Activated CD4-positive, alpha-beta T cell treated with anti-CD3 and anti-CD28 coated beads for 36 hours (primary cell): ENCODE measurements at regions of chr18 and their contacts with region 1.

Region 1: GRCh38 chr18:54284981-54285785 is 15.9 kb downstream of the POLI start:
- DNase-seq: peak; percentile 90
- ATAC-seq: peak; percentile 98
- H3K4me3 Mint-ChIP-seq: no peak overlapping the region
- H3K27ac Mint-ChIP-seq: peak overlapping the region; percentile 64
- H3K4me1 Mint-ChIP-seq: peaks cover 25% of the 10 kb centered on the region
- H3K27me3 Mint-ChIP-seq: no peaks in the 10 kb centered on the region

Region 2: GRCh38 chr18:54162431-54162830 is 122.8 kb before region 1 on chr18:
- CTCF ChIA-PET with region 1: no interaction called
- POLR2A ChIA-PET with region 1: no interaction called
- intact Hi-C with region 1: loop called in 1 of 2 experiments (anchors 5 kb)
- DNase-seq: no peak
- ATAC-seq: no peak
- H3K4me3 Mint-ChIP-seq: no peak overlapping the region
- H3K27ac Mint-ChIP-seq: no peak overlapping the region
- H3K4me1 Mint-ChIP-seq: peaks cover 24% of the 10 kb centered on the region
- H3K27me3 Mint-ChIP-seq: no peaks in the 10 kb centered on the region

Region 3: DNA sequence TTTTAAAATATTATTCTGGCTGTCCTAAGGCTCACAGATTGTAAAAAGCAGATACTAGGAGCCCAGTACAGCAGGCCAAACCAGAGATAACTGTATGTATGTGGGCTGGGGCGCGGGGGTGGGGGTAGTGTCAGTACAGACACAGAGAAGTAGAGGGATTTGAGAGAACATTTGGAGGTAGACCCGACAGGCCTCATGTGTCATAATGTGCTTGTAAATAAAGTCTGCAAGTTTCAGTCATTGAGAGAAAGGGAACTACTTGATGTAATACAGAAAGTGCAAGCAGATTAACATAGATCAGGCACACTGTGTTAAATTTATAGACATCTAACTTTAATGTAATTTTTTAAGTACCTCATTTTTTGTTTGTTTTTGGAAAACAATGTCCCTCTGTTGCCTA is 23.3 kb before region 1 on chr18:
- CTCF ChIA-PET with region 1: interaction called, 4 read pairs
- POLR2A ChIA-PET with region 1: interaction called, 3 read pairs
- intact Hi-C with region 1: loop called (anchors 1 kb)
- DNase-seq: peak; percentile 82
- ATAC-seq: peak; percentile 71
- H3K4me3 Mint-ChIP-seq: peak overlapping the region; percentile 52
- H3K27ac Mint-ChIP-seq: peak overlapping the region; percentile 90
- H3K4me1 Mint-ChIP-seq: peaks cover 54% of the 10 kb centered on the region
- H3K27me3 Mint-ChIP-seq: no peaks in the 10 kb centered on the region

Region 4: DNA sequence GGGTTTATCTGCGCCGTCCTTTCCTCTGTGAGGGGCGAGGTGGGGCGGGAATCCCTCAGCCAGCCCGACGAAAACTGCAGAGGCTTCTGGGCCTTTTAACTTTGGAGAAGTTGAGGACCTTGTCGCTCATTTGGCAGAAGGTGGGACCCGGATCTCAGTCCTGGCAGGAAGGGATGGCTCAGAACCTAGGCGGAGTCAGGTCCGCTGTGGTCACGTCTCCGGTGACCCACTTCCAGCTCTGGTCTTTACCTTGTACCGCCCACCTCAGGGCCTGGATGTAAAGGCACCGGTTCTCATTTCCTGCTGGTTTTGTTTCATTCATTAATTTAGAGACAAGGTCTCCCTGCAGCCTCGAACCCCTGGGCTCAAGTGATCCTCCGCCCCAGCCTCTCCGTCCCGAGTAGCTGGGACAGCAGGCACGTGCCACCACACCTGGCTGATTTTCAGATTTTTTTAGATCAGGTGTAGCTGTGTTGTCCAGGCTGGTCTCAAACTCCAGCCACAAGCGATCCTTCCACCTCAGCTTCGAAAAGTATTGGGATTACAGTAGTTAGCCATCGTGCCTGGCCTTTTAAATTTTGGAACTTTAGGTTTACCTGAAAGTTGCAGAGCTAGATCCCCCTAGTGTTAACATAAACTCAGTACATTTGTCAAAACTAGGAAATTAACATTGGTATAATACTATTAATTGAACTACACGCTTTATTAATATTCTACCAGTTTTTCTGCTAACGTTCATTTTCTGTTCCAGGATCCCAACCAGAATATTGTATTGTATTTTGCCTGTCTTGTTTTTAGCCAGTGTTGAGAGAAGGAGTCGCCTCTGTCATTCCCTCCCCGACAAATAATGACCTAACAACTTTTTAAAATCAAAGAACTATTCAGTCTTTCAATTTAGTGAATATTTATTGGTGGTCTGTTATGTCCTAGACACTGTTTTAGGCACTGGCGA is 15.0 kb before region 1 on chr18:
- CTCF ChIA-PET with region 1: interaction called, 26 read pairs
- POLR2A ChIA-PET with region 1: interaction called, 9 read pairs
- intact Hi-C with region 1: loop called (anchors 1 kb)
- DNase-seq: peak; percentile 75
- ATAC-seq: peak; percentile 63
- H3K4me3 Mint-ChIP-seq: peak overlapping the region; percentile 78
- H3K27ac Mint-ChIP-seq: peak overlapping the region; percentile 99
- H3K4me1 Mint-ChIP-seq: peaks cover 28% of the 10 kb centered on the region
- H3K27me3 Mint-ChIP-seq: no peaks in the 10 kb centered on the region

Region 5: GRCh38 chr18:54357660-54358494 is 72.7 kb after region 1 on chr18 and contains the starts of genes C18orf54 and STARD6:
- CTCF ChIA-PET with region 1: interaction called, 4 read pairs
- POLR2A ChIA-PET with region 1: no interaction called
- intact Hi-C with region 1: loop called (anchors 1 to 2 kb)
- DNase-seq: peak; percentile 92
- ATAC-seq: peak; percentile 97
- H3K4me3 Mint-ChIP-seq: peak within 1 kb of the TSS; percentile 99
- H3K27ac Mint-ChIP-seq: peak within 1 kb of the TSS; percentile 97
- H3K4me1 Mint-ChIP-seq: peaks cover 16% of the 10 kb centered on the region
- H3K27me3 Mint-ChIP-seq: peaks cover 4% of the 10 kb centered on the region
- total RNA-seq, gene C18orf54: 8.5 to 9.9 TPM
- total RNA-seq, gene STARD6: 0.23 TPM in 1 of 2 experiments, not detected in the other